Activated B cell treated with CpG ODN at 0.5 μM for 24 hours (primary cell): ENCODE measurements at regions of chr2 and their contacts with region 1.

Region 1: GRCh38 chr2:96174251-96175144 is 29.3 kb upstream of the DUSP2 start:
- DNase-seq: peak; percentile 76
- ATAC-seq: peak; percentile 99
- H3K4me3 Mint-ChIP-seq: no peak overlapping the region
- H3K27ac Mint-ChIP-seq: no peak overlapping the region
- H3K4me1 Mint-ChIP-seq: peaks cover 20% of the 10 kb centered on the region
- H3K27me3 Mint-ChIP-seq: no peaks in the 10 kb centered on the region
- CTCF ChIP-seq: peak; percentile 75

Region 2: GRCh38 chr2:96024336-96025193 is 149.9 kb before region 1 on chr2:
- CTCF ChIA-PET with region 1: interaction called, 17 read pairs
- POLR2A ChIA-PET with region 1: interaction called, 3 read pairs
- intact Hi-C with region 1: loop called (anchors 10 kb)
- DNase-seq: no peak
- ATAC-seq: no peak
- H3K4me3 Mint-ChIP-seq: no peak overlapping the region
- H3K27ac Mint-ChIP-seq: no peak overlapping the region
- H3K4me1 Mint-ChIP-seq: no peaks in the 10 kb centered on the region
- H3K27me3 Mint-ChIP-seq: no peaks in the 10 kb centered on the region
- CTCF ChIP-seq: no peak

Region 3: DNA sequence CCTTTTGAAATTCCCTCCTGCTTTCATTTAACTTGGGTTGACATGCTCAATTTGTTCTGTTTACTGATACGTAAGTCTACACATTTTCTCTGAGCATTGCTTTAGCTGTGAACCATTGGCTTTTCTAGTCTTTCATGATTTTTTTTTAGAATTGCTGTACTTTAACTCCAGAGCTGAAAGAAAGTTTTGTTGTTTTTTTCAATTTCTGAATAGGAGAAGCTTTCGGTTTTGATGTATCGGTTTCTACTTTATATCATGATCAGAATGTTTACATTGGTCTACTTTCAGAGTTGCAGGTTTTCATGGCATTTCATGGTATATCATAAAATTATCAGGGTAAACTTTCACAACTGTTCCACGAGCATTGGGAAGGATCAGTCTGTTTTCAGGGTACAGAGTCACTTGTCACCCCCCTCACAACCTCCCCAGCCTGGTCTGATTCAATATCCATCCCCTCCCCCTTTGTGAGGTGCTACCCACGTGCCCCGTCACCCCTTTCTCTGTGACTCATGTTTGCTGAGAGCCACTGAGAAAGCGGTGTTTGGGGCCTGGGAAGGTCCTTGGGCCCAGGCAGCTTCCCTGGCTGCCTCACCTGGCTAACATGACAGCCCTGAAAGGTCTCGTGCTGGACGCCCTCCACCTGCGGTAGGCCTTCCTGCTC is 43.2 kb before region 1 on chr2:
- CTCF ChIA-PET with region 1: interaction called, 511 read pairs
- POLR2A ChIA-PET with region 1: no interaction called
- intact Hi-C with region 1: no loop called
- DNase-seq: no peak
- ATAC-seq: no peak
- H3K4me3 Mint-ChIP-seq: no peak overlapping the region
- H3K27ac Mint-ChIP-seq: no peak overlapping the region
- H3K4me1 Mint-ChIP-seq: no peaks in the 10 kb centered on the region
- H3K27me3 Mint-ChIP-seq: no peaks in the 10 kb centered on the region
- CTCF ChIP-seq: no peak

Region 4: DNA sequence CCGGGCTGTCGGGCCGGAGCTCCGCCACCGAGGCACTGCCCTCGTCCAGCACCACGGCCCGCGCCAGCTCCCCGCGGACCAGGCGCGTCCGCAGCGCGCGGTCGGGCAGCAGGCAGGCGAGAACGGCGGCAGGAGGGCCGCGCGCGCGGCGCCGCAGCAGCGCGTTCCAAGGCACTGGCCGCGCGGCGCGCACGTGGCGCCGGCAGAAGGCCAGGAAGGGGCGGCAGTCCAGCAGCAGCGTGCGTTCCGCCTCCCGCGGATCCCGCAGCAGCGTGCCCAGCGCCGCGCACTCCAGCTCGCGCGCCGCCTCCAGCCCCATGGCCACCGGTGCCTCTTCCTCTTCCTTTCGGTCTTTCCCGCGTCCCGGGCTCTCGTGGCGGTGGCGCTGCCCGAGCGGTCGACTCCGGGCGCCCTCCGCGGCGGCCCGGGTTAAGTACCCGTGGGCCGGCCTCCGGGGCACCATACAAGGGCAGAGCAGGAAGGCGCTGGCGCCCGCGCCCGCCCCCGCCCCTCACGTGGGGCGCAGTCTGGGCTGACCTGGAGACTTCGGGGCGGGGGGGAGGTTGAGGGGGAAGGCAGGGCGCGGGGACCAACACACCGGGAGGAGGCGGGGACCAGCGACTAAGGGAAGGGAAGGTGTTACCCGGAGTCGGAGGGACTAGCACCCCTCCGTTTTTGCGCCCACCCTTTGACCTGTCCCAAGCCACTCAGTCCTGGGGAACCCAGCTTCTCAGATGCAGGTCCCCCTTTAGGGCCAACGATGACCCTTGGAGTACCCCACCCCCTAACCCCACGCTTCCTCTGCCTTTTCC is 29.3 kb before region 1 on chr2 and contains the start of gene DUSP2:
- CTCF ChIA-PET with region 1: interaction called, 511 read pairs
- POLR2A ChIA-PET with region 1: interaction called, 534 read pairs
- intact Hi-C with region 1: no loop called
- DNase-seq: peak; percentile 92
- ATAC-seq: peak; percentile 58
- H3K4me3 Mint-ChIP-seq: peak within 1 kb of the TSS; percentile 93
- H3K27ac Mint-ChIP-seq: peak within 1 kb of the TSS; percentile 98
- H3K4me1 Mint-ChIP-seq: peaks cover 71% of the 10 kb centered on the region
- H3K27me3 Mint-ChIP-seq: no peaks in the 10 kb centered on the region
- CTCF ChIP-seq: no peak
- total RNA-seq, gene DUSP2: 118 and 122 TPM in 2 replicates

Region 5: DNA sequence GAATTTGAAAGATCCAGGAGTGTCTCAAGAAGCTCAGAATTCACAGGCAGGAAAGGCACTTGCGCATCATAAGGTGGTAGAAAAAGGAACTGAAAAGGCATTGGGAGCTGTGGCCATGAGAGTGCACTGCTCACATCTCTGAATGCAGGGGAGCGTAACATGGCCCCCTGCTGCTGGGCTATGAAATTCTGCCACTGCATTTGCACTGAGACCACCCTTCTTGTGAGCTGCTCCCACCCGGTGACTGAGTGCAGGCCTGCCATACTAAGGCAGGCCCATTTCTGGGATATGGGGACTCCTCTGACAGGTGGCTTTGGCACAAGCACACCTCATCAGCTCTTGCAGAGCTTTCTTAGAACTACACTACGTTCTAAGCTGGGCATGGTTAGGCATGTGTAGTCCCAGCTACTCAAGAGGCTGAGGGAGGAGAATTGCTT is 59.4 kb after region 1 on chr2:
- CTCF ChIA-PET with region 1: interaction called, 22 read pairs
- POLR2A ChIA-PET with region 1: no interaction called
- intact Hi-C with region 1: no loop called
- DNase-seq: peak; percentile 37
- ATAC-seq: peak; percentile 99
- H3K4me3 Mint-ChIP-seq: peak overlapping the region; percentile 70
- H3K27ac Mint-ChIP-seq: peak overlapping the region; percentile 84
- H3K4me1 Mint-ChIP-seq: peaks cover 17% of the 10 kb centered on the region
- H3K27me3 Mint-ChIP-seq: no peaks in the 10 kb centered on the region
- CTCF ChIP-seq: no peak